RWPE1 (cell line): ENCODE measurements at regions of chr3 and their contacts with region 1.

Region 1: DNA sequence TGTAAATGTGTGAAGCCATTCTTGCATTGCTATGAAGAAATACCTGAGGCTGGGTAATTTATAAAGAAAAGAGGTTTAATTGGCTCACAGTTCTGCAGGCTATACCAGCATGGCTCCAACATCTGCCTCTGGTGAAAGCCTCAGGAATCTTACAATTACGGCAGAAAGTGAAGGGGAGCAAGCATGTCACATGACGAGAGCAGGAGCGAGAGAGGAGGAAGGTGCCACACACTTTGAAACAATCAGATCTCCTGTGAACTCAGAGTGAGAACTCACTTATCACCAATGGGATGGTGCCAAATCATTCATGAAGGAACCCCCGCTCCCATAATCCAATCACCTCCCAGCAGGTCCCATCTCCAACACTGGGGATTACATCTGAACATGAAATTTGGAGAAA is 213.6 kb upstream of the TSC22D2 start:
- DNase-seq: no peak
- H3K27ac ChIP-seq: no peak overlapping the region
- CTCF ChIP-seq: no peak

Region 2: DNA sequence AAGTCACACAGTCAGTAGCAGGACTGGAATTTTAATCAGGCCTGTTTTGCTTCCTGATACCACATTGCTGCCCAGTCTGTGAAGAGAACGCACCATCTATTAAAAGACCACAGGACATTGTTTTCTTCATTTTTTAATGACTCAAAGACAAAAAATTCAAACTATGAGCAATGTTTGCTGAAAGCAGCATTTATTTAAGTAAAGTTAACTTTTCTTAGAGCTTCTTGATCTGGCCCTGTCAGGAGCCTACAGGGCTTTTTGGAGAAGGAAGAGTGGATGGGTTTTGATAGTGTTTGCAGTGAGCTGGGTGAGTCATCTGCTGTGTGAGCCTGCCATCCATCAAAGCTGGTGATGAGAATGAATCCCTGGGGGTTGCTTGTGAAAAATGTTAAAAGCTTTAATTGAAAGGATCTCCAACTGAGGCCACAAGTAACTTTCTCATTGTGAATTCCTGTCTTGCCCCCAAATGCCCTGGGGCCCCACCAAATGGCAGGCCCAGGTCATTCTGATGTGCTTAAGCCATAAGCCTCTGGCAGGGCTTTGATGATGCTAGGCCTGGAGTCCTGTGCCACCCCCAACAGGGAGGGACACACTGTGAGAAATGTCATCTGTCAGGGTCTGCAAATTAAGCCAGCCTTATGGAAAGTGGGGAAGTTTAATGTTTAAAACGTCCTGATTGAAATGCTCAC is 87.6 kb before region 1 on chr3:
- CTCF ChIA-PET with region 1: no interaction called
- POLR2A ChIA-PET with region 1: no interaction called
- DNase-seq: no peak
- H3K27ac ChIP-seq: no peak overlapping the region
- CTCF ChIP-seq: no peak

Region 3: DNA sequence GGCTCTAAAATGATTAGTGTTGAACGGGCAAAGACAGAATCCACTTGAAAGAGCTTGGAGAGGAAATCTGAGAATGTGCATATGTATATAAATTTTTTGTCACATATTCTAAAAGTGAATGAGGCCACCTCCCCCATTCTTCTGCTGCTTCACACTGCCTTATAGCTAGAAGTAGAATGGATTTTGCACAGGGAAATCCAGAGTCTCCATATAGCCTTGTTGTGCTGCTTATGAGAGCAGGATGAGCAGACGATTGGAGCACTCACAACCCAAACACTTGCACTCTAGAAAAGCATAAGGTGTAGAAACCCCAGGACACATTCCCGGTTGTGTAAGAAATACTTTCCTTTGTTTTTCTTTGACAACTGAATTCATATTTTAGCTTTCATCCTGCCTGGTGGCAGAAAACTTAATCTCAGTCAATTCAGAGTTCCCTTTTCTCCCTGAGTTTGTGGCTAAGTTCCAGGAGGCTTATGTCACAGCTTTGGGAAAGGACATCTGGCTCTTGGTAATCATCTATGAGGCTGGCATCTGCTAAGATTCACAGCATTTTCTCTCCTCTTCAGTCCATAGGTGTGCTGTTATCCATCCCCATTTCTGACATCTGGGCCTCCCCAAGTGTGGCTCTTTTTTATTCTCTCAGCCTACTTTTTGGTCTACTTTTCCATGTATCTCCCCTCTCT is 35.4 kb before region 1 on chr3:
- CTCF ChIA-PET with region 1: no interaction called
- POLR2A ChIA-PET with region 1: interaction called, 13 read pairs
- DNase-seq: no peak
- H3K27ac ChIP-seq: no peak overlapping the region
- CTCF ChIP-seq: no peak